ENCODE measurements at regions of chr6 and their contacts with region 1.

Region 1: DNA sequence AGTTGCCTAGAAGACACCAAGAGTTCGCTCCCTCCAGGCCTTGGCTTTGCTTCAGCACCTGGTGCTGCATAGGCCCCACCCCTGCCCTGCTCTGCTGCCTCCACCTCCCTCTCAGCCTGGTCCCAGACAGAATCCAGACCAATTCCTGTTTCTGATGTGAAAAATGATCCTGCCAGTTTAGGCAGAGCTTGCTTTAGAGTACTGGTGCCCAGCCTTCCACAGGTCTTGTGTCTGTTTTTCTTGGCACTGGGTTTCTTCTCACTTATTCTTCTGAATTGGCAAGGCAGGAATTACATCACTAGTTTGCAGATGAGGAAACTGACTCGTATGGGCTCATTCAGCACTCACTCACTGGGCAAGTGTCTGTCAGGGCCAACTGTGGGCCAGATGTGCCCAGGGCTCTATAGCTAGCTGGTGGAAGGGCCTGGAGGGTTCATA is 53.0 kb downstream of the HLA-A start:
- DNase-seq: no peak
- H3K4me3 ChIP-seq: no peak overlapping the region
- H3K27ac ChIP-seq: no peak overlapping the region
- H3K4me1 ChIP-seq: no peaks in the 10 kb centered on the region
- H3K27me3 ChIP-seq: no peaks in the 10 kb centered on the region
- CTCF ChIP-seq: no peak
- POLR2A ChIP-seq: no peak

Region 2: GRCh38 chr6:29864037-29864795 is 131.1 kb before region 1 on chr6:
- intact Hi-C with region 1: loop called (anchors 10 kb)
- DNase-seq: no peak
- H3K4me3 ChIP-seq: no peak overlapping the region
- H3K27ac ChIP-seq: no peak overlapping the region
- H3K4me1 ChIP-seq: no peaks in the 10 kb centered on the region
- H3K27me3 ChIP-seq: no peaks in the 10 kb centered on the region
- CTCF ChIP-seq: no peak
- POLR2A ChIP-seq: no peak